Activated CD4-positive, alpha-beta T cell treated with anti-CD3 and anti-CD28 coated beads, Interleukin-2, amount 10 ng/mL, durations not matched to agents 24 days and 14 days (primary cell): ENCODE measurements at regions of chr10 and their contacts with region 1.

Region 1: DNA sequence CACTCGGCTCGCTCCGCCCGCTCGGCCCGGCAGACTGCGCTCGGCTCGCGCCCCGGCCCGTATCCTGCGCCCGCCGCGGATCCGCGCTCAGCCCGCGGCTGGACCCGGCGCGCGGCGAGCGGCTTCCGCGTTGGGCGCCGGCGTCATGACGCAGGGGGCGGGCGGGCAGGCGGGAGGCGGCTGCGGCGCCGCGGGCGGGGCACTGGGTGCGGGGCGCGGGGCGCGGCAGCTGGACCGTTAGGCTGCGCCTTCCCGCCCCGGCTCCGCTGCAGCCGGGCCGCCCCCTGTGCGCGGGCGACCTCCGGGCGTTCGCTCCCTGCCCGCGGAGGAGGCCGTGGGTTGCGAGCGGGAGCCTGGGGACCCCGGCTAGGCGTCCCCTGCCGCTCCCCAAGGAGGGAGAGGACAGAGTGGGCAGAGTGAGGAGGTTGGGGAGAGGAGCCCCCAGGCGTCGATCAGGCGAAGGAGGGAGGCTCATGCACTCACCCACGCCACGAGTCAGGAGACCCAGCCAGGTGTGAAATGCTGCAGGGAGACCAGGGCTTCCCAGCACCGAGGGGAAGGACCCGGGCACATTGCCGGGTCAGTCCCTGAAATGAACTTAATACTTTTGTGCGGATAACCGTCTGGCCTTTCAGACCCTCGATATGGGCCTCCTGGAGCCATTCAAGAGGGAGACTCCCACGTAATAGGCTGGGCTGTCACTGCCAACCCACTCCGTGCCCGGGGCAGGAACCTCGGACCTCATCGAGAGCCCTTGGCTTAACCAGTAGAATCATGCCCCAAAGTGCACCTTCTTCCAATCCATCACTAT is at the start of gene PIP4K2A:
- DNase-seq: peak; percentile 94
- H3K4me3 Mint-ChIP-seq: peak within 1 kb of the TSS; percentile 90
- H3K27ac Mint-ChIP-seq: peak within 1 kb of the TSS; percentile 85
- H3K4me1 Mint-ChIP-seq: peaks cover 33% of the 10 kb centered on the region
- H3K27me3 Mint-ChIP-seq: peaks cover 2% of the 10 kb centered on the region
- total RNA-seq, gene PIP4K2A: 94.6 and 101 TPM in 2 replicates

Region 2: DNA sequence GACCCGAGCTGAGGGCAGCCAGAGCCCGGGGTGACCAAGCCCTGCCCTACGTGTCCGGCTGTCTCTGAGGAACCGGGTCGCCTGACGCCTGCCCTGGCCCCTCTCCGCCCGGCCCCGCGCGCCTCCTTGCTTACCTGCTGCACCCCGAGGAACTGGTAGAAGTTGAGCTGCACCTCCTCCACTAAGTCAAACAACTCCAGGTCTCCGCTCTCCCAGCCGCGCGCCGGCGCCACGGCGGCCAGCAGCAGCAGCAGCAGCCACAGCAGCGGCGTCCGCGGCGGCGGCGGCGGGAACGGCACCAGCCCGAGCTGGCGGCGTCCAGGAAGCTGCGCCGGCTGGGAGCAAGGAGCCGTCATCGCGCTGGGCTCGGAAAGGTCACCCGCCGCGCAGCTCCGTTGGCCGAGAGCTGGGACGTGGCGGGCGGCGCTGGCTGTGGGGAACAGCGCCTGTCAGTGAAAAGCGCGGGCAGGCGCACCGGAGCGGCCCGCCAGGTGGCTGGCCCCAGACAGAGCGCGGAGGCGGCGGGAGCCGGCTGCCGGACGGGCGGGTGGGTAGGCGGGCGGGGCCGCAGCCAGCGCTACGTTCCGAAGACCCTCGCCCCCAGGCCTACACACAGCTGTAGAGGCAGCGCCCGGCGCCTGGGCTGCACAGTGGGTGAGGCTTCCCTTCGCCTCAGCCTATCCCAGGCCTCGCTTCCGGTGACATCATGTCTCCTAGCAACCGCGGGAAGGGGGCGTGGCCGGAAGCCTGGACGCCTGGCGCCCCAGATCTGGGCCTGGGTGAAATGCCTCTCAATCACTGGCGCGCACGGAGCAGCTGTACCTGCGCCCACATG is 711.4 kb before region 1 on chr10 and contains the start of gene DNAJC1:
- intact Hi-C with region 1: loop called (anchors 5 kb)
- DNase-seq: peak; percentile 100
- H3K4me3 Mint-ChIP-seq: peak within 1 kb of the TSS; percentile 93
- H3K27ac Mint-ChIP-seq: peak within 1 kb of the TSS; percentile 96
- H3K4me1 Mint-ChIP-seq: peaks cover 26% of the 10 kb centered on the region
- H3K27me3 Mint-ChIP-seq: peaks cover 18% of the 10 kb centered on the region
- total RNA-seq, gene DNAJC1: 22.1 and 22.4 TPM in 2 replicates

Region 3: DNA sequence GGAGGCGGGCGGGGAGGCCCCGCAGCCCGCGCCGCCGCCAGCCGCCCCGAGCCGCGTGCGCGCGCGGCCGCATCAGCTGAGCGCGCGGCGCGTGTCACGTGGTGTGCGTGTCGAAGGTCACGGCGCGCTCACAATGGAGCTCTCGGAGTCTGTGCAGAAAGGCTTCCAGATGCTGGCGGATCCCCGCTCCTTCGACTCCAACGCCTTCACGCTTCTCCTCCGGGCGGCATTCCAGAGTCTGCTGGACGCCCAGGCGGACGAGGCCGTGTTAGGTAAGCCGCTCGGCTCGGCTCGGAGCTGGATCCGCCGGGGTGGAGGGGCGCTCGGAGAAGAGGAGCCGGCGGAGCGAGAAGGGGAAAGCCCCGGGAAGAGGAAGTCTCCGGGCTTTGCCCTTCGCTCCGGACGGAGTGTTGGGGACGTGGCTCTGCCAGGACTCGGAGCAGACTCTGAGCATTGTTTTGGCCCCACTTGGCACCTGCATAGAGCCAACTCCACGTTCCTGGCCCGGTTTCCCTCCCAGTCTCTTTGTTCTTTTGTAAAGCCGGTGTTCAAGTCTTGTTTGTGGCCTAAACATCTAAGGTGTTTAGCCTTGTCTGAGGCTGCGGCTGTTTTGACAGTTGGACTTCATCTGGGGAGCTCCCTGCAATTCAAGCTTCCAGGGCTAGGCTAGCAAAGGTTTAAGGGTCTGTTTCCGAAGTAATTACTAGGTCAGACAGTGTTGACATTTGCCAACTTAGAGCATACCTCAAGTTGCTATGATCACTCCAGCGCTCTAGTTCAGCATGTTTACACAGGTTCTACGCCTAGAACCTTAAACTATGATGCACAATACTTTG is 398.2 kb before region 1 on chr10 and contains the start of gene COMMD3:
- intact Hi-C with region 1: loop called (anchors 5 kb)
- DNase-seq: peak; percentile 95
- H3K4me3 Mint-ChIP-seq: peak within 1 kb of the TSS; percentile 87
- H3K27ac Mint-ChIP-seq: peak within 1 kb of the TSS; percentile 94
- H3K4me1 Mint-ChIP-seq: peaks cover 29% of the 10 kb centered on the region
- H3K27me3 Mint-ChIP-seq: no peaks in the 10 kb centered on the region
- total RNA-seq, gene COMMD3: 76.7 and 79.7 TPM in 2 replicates

Region 4: GRCh38 chr10:22560913-22561239 is 153.8 kb before region 1 on chr10:
- intact Hi-C with region 1: no loop called
- DNase-seq: no peak
- H3K4me3 Mint-ChIP-seq: no peak overlapping the region
- H3K27ac Mint-ChIP-seq: no peak overlapping the region
- H3K4me1 Mint-ChIP-seq: peaks cover 15% of the 10 kb centered on the region
- H3K27me3 Mint-ChIP-seq: no peaks in the 10 kb centered on the region

Region 5: DNA sequence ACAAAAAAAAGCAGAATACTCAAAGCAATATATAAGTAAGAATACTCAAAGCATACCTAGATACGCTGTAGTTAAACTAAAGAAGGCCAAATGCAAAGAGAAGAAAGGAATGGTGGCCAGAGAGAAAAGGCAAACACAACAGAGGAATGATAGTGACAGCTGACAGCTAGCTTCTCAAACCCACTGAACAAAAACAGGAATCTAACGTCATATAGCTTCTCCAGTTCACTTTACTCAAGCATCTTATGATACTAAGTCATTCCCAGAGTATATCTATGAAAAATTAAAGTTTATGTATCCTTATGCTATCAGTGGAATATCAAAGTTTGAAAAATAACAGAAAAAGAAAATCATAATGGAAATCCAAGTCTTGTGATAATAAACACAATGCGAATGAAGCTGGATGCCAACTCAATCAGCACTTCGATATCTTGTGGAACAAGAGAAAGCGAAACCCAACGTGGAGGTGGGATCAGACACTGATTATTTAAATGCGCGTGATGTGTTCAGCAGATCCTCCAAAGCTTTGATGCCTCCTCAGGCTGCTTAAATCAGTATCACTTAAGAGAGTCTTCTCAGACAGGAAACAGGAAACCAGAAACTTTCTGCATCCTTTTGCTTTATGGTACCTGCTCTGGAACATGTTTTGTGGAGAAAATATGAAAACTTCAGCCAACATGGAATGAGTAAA is 103.1 kb before region 1 on chr10:
- intact Hi-C with region 1: loop called (anchors 5 kb)
- DNase-seq: peak; percentile 92
- H3K4me3 Mint-ChIP-seq: peak overlapping the region; percentile 63
- H3K27ac Mint-ChIP-seq: peak overlapping the region; percentile 64
- H3K4me1 Mint-ChIP-seq: peaks cover 66% of the 10 kb centered on the region
- H3K27me3 Mint-ChIP-seq: no peaks in the 10 kb centered on the region

Region 6: GRCh38 chr10:22648547-22648961 is 66.1 kb before region 1 on chr10:
- intact Hi-C with region 1: loop called (anchors 2 kb)
- DNase-seq: peak; percentile 63
- H3K4me3 Mint-ChIP-seq: peak overlapping the region; percentile 90
- H3K27ac Mint-ChIP-seq: peak overlapping the region; percentile 100
- H3K4me1 Mint-ChIP-seq: peaks cover 87% of the 10 kb centered on the region
- H3K27me3 Mint-ChIP-seq: no peaks in the 10 kb centered on the region

Region 7: DNA sequence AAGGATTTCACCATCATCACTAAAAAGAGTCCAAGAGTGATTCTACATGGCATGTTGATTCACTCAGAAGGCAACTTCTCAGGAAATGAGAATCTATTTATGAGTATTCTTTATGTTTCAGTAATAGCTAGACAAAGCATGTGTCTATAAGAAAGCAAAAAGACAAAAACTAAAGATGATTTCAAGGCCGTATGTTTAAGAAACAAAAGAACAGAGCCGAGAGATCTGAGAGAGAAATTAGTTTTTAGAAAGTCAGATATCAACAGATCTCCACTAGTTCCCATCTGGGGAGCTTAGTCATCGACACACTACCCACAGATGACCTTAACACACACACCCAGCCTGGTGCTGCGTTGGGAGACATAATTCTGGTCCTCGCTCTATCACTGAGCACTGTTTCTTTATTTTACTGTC is 21.3 kb before region 1 on chr10:
- intact Hi-C with region 1: loop called (anchors 1 kb)
- DNase-seq: no peak
- H3K4me3 Mint-ChIP-seq: peak overlapping the region; percentile 52
- H3K27ac Mint-ChIP-seq: peak overlapping the region; percentile 89
- H3K4me1 Mint-ChIP-seq: peaks cover 44% of the 10 kb centered on the region
- H3K27me3 Mint-ChIP-seq: no peaks in the 10 kb centered on the region